ENCODE measurements at regions of chr9 and their contacts with region 1.

Region 1: DNA sequence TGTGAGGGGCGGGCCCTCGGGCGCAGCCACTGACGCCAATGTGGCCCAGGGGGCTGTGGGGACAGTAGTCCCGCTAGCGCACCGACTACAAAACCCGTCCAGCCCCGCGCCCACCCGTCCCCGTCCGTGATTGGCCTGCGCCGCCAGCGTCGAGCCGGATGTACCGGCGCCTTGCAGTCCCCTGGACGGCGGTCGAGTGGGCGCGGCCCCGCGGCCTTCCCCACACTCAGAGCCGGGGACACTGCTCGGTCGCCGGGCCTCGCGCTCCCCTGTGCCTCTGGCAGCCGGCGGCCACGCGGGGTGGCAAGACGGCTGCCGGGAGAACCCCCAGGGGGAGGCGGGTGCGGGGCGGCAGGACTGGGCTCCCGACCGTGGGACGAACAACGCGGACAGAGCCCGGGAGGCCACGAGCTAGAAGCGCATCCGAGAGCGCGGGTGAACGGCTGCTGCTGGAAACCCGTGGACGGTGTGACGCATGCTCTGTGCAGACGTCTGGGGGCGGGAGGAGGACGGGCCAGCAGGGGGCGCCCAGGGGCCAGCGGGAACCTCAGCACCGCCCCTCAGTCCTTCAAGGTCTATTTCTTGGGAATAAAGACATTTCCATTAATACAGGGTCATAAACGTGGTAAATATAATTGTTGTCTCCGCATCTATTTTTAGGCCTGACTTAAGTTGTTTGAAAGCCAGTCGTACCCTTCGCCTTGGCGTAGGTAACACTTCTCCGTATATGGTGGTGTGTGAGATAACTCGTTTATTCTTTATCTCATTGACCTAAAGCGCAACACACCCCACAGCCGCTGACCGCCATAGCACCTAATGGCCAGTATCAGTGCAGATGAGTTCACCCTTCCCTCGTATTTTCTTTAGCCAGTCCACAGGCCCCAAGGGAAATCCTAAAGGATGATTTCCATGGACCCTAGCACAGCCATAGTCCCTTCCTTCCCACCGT is 629 bp upstream of the BICD2 start:
- DNase-seq: peak; percentile 89 to 99
- H3K4me3 ChIP-seq: peak overlapping the region; percentile 67
- H3K27ac ChIP-seq: peak overlapping the region; percentile 90
- H3K4me1 ChIP-seq: peaks cover 16% of the 10 kb centered on the region
- H3K27me3 ChIP-seq: no peaks in the 10 kb centered on the region
- CTCF ChIP-seq: peak; percentile 95

Region 2: GRCh38 chr9:92669890-92670708 is 95.2 kb before region 1 on chr9 and contains the start of gene IPPK:
- CTCF ChIA-PET with region 1: no interaction called
- POLR2A ChIA-PET with region 1: no interaction called
- intact Hi-C with region 1: loop called (anchors 1 kb)
- DNase-seq: peak; percentile 95 to 99
- H3K4me3 ChIP-seq: peak within 1 kb of the TSS; percentile 95
- H3K27ac ChIP-seq: peak within 1 kb of the TSS; percentile 95
- H3K4me1 ChIP-seq: peaks cover 19% of the 10 kb centered on the region; the same call in 1 of the 2 replicates
- H3K27me3 ChIP-seq: no peaks in the 10 kb centered on the region
- CTCF ChIP-seq: no peak
- total RNA-seq, gene IPPK: 12.3 TPM in 2 replicates

Region 3: DNA sequence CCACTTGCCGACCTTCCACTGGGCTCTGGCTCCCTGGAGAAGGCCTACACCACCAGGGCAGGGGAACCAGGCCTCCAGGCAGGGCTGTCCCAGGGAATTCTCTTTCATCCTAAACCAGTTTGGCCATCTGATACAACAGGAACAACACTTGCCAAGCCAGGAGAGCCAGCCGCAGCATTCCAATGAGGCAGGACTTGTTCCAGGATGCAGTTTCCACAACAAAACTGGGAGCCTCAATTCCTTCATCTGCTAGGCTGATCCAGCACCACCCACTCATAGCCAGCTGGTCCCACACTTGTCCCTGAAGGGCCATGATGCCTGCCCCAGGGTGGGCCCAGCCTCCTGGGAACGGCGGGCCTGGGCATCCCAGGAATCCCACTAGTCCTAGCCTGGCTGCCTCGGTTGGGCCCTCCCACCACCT is 26.6 kb before region 1 on chr9:
- CTCF ChIA-PET with region 1: no interaction called
- POLR2A ChIA-PET with region 1: interaction called, 3 read pairs
- intact Hi-C with region 1: loop called (anchors 2 kb)
- DNase-seq: peak in 1 of 2 experiments; percentile 84
- H3K4me3 ChIP-seq: no peak overlapping the region
- H3K27ac ChIP-seq: no peak overlapping the region
- H3K4me1 ChIP-seq: no peaks in the 10 kb centered on the region
- H3K27me3 ChIP-seq: no peaks in the 10 kb centered on the region
- CTCF ChIP-seq: no peak

Region 4: DNA sequence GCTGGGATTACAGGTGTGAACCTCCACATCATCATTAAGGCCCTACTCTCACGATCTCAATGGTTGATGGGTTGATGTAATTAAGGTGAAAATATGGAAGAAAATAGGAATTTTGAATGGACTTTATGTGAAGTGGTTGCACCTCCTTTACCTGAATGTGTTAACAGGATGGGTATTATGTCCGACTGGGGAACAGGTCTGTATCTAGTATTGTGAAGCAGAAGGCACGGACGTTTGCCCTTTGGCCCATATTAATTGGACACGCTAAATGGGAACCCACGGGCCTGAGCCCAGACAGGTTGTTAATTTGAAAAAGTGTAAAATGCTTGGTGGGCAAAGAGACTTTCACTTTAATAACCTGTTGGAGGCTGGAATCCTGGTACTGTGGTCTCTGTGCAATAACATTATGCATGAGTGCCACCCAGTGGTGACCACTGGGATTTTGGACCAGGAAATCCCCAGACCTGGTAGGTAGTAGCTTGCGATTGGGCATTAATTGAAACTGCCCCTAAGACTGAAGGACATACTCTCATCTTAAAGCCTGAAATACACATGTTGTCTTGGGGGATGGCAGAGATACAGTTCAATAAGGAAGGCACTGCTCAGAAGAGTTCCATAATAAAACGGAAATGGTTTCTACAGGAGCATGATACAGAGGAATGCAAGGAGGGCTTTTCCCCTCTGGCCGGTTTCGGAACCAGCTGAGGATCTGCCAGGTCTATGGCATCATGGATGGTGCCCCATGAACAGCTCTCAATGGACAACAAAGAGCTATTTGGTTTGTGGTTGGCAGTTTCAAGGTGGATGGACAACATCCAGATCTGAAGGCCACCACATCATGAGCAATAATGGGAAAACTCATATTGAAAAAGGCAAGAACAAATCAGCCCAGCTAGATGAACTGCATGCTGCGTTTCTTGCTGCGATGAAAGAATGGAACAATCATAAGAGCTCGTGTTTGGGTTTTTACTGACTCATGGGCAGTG is 25.6 kb after region 1 on chr9:
- CTCF ChIA-PET with region 1: interaction called, 3 read pairs
- POLR2A ChIA-PET with region 1: interaction called, 4 read pairs
- intact Hi-C with region 1: loop called (anchors 1 kb)
- DNase-seq: peak; percentile 65 to 84
- H3K4me3 ChIP-seq: no peak overlapping the region
- H3K27ac ChIP-seq: no peak overlapping the region
- H3K4me1 ChIP-seq: no peaks in the 10 kb centered on the region
- H3K27me3 ChIP-seq: no peaks in the 10 kb centered on the region
- CTCF ChIP-seq: peak; percentile 91

Measured in PC-9 (cell line).